Activated CD4-positive, alpha-beta memory T cell treated with anti-CD3 and anti-CD28 coated beads for 36 hours (primary cell): ENCODE measurements at regions of chr21 and their contacts with region 1.

Region 1: DNA sequence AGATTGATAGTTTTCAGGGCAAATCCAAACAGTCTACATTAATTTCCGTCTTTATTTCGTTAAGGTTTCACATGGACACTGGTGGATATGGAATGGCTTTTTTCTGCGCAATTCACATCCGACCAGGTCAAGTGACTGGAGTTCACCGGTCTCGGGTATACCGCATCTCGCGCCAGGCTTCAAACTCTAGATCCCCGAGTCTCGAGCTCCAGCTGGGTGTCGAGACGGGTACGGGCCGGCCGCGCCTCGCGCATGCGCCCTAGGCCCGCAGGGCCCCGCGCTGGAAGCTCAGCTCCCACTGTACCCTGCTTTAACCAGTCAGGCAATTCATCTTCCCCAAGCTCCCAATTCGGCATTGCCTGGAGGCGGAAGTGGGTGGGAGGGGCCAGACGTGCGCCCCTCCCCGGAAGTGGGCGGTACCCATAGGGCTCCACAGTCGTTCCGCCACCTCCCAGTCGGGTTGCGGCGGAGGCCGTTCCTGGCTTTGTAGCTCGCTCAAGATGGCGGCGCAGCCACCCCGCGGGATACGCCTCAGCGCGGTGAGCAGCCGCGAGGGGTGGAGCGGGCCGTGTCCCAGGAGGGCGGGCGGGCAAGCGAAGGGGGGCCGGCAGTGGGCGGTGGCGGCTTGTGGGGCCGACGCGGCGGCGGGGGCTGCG is at the start of gene MORC3:
- DNase-seq: peak; percentile 99
- H3K4me3 Mint-ChIP-seq: peak within 1 kb of the TSS; percentile 90
- H3K27ac Mint-ChIP-seq: peak within 1 kb of the TSS; percentile 97
- H3K4me1 Mint-ChIP-seq: peaks cover 30% of the 10 kb centered on the region
- H3K27me3 Mint-ChIP-seq: no peaks in the 10 kb centered on the region
- total RNA-seq, gene MORC3: 27.7 to 30.0 TPM

Region 2: DNA sequence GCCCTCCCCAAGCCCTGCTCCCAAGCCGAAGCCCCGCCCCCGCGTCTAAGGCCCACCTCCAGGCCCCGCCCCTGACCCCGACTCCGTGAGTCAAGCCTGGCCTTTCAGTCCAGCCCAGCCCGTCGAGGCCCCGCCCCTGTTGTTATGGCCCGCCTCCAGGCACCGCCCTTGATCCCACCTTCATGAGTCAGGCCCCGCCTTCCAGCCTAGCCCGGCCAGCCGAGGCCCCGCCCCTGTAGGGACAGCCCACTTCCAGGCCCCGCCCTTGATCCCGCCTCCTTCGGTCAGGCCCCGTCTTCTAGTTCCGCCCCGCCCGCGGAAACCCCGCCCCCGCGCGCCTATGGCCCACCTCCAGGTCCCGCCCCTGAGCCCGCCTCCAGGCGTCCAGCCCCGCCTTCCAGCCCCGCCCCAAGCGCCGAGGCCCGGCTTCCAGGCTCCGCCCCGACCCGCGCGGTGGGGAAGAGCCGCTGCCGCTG is 163.5 kb before region 1 on chr21:
- CTCF ChIA-PET with region 1: interaction called, 6 read pairs
- POLR2A ChIA-PET with region 1: interaction called, 11 read pairs
- intact Hi-C with region 1: loop called (anchors 1 kb)
- DNase-seq: peak; percentile 100
- H3K4me3 Mint-ChIP-seq: peak overlapping the region; percentile 82
- H3K27ac Mint-ChIP-seq: no peak overlapping the region
- H3K4me1 Mint-ChIP-seq: peaks cover 25% of the 10 kb centered on the region
- H3K27me3 Mint-ChIP-seq: no peaks in the 10 kb centered on the region

Region 3: DNA sequence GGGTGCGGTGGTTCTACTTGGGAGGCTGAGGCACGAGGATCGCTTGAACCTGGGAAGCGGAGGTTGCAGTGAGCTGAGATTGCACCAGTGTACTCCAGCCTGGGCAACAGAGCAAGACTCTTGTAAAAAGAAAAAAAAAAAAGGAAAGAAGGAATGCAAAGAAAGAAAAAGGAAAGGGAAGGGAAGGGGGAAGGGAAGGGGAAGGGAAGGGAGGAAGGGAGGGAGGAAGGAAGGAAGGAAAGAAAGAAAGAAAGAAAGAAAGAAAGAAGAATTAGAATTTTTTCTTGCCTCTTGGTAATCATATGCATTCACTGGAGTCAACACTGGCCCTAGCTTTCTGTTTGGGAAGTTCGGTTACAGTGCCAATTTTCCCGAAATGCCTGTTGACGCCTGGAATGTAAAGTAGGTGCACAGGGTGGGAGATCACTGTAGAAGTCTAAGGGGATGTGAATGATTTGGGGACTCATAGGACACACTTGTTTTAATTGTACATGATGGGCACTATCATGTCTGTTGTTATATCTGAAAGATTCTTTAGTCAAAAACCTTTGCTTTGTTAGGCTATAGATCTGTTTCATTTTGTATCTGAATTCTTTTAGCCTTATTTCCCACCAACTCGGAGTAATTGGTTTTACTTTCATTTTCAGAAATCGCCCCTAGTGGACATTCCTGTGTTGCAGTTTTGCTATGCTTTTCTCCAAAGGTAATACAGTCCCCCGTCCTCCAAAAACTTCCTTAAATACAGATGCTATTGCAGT is 59.7 kb before region 1 on chr21:
- CTCF ChIA-PET with region 1: interaction called, 7 read pairs
- POLR2A ChIA-PET with region 1: interaction called, 4 read pairs
- intact Hi-C with region 1: loop called (anchors 1 kb)
- DNase-seq: peak; percentile 34
- H3K4me3 Mint-ChIP-seq: peak overlapping the region; percentile 52
- H3K27ac Mint-ChIP-seq: peak overlapping the region; percentile 63
- H3K4me1 Mint-ChIP-seq: peaks cover 17% of the 10 kb centered on the region
- H3K27me3 Mint-ChIP-seq: no peaks in the 10 kb centered on the region

Region 4: DNA sequence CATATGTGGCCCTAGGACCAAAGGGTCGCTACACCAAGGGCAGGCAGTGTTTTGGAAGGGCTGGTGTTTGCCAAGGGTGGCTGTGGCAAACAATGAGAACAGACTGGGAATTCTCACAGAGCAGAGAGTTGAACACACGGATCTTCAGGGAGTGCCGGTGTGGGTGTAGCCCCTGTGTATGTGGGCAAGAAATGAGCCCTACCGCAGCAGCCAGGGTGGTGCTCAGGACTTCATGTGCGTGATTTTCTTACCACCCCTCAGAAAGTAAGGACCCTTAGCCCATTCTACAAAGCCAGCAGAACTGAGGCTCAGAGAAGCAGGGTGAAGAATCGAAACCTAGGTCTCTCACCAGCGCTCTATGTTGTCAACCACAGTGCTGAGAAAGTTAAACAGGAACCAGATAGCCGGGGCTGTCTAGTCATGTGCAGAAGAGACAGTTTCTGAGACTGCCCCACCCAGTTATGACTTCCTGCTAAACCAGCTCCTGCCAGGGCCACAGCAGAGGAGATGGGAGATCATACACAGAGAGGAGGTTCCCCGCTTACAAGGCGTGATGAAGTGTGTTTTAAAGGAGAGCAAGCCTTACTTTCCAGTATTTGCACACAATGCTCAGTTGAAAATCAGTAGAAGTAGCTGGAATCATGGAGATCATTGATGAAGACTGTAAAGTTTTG is 21.8 kb before region 1 on chr21:
- CTCF ChIA-PET with region 1: interaction called, 3 read pairs
- POLR2A ChIA-PET with region 1: interaction called, 26 read pairs
- intact Hi-C with region 1: loop called (anchors 1 kb)
- DNase-seq: peak; percentile 81
- H3K4me3 Mint-ChIP-seq: peak overlapping the region; percentile 60
- H3K27ac Mint-ChIP-seq: peak overlapping the region; percentile 90
- H3K4me1 Mint-ChIP-seq: peaks cover 46% of the 10 kb centered on the region
- H3K27me3 Mint-ChIP-seq: no peaks in the 10 kb centered on the region

Region 5: GRCh38 chr21:36385233-36386030 is 65.5 kb after region 1 on chr21 and contains the start of gene CHAF1B:
- CTCF ChIA-PET with region 1: no interaction called
- POLR2A ChIA-PET with region 1: interaction called, 4 read pairs
- intact Hi-C with region 1: loop called (anchors 2 kb)
- DNase-seq: peak; percentile 88
- H3K4me3 Mint-ChIP-seq: peak within 1 kb of the TSS; percentile 84
- H3K27ac Mint-ChIP-seq: peak within 1 kb of the TSS; percentile 60
- H3K4me1 Mint-ChIP-seq: peaks cover 20% of the 10 kb centered on the region
- H3K27me3 Mint-ChIP-seq: no peaks in the 10 kb centered on the region
- total RNA-seq, gene CHAF1B: 28.9 to 31.2 TPM